ENCODE measurements at regions of chr15 and their contacts with region 1.

Region 1: GRCh38 chr15:88108991-88109390 is 147.5 kb downstream of the NTRK3 start:
- DNase-seq: no peak
- H3K4me3 ChIP-seq: no peak overlapping the region
- H3K27ac ChIP-seq: no peak overlapping the region
- H3K4me1 ChIP-seq: no peaks in the 10 kb centered on the region
- H3K27me3 ChIP-seq: no peaks in the 10 kb centered on the region
- CTCF ChIP-seq: no peak
- POLR2A ChIP-seq: no peak

Region 2: DNA sequence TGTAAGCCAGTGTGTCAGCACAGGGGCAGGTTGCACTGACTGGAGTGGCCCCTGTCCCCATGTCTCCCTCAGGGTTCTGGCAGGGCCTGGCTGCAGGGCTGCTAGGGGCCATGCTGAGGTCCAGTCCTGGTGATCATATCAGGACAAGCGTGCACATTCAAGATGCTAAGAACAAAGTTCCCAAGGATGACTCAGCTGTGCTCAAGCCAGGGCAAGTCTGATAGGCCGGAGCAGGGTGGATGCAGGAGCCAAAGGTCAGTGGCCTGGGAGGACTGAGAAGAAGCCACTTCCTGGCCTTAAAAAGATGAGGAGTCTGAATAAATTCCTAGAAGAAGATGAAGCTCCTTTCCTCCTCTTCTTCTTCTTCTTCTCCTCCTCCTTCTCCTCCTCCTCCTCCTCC is 1676.1 kb before region 1 on chr15:
- CTCF ChIA-PET with region 1: no interaction called
- POLR2A ChIA-PET with region 1: no interaction called
- dilution Hi-C with region 1: no loop called
- intact Hi-C with region 1: loop called (anchors 5 kb)
- DNase-seq: no peak
- H3K4me3 ChIP-seq: no peak overlapping the region
- H3K27ac ChIP-seq: no peak overlapping the region
- H3K4me1 ChIP-seq: no peaks in the 10 kb centered on the region
- H3K27me3 ChIP-seq: no peaks in the 10 kb centered on the region
- CTCF ChIP-seq: no peak
- POLR2A ChIP-seq: no peak